Caco-2 (cell line): ENCODE measurements at regions of chr2 and their contacts with region 1.

Region 1: DNA sequence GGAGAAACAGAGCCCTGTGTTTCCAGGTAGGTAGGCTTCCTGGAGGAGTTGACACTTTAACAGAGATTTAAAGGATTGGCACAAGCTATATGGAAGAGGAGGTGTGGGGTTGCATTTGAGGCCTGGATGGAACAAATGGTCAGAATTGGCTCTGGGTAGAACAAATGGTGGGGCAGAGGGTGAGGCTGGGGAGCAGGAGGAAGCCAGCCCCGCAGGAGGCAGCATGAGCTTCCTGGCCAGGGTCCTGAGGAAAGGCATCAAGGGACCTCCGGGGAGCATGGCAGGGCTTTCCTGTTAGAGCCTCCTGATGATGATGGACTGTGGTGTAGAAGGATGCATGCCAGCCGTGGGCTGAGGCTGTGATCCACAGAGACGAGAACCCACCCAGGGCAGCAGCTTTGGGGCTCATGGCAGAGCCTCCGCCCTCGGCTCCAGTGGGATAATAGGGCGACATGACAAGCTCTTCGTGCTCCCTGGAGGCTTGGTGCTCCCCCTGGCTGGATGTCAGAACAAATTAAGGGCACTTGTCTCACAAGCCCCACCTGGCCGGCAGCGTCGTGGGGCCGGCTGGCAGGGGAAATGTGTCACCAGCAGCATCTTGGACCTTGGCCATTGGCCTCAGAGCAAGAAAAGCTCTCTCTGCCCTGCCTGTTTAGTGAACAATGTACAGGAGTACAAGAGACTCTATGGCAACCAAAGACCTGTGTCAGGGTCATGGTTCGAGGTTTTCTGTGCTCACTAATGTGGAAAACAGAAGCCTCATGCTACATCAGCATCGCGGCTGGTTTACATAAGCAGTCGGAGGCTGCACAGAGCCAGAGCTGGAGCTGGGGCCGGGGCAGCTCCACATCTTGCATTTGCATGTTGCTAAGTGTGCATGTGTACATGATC is 153.5 kb downstream of the MYCN start:
- DNase-seq: peak; percentile 25 to 73
- H3K4me3 ChIP-seq: no peak overlapping the region
- H3K4me3 Mint-ChIP-seq: no peak overlapping the region
- H3K27ac Mint-ChIP-seq: peak overlapping the region; percentile 37
- H3K4me1 ChIP-seq: peaks cover 39% of the 10 kb centered on the region
- H3K4me1 Mint-ChIP-seq: peaks cover 16% of the 10 kb centered on the region
- H3K27me3 ChIP-seq: no peaks in the 10 kb centered on the region
- H3K27me3 Mint-ChIP-seq: no peaks in the 10 kb centered on the region
- CTCF ChIP-seq: no peak

Region 2: GRCh38 chr2:16012619-16013358 is 81.1 kb before region 1 on chr2:
- CTCF ChIA-PET with region 1: no interaction called
- POLR2A ChIA-PET with region 1: no interaction called
- intact Hi-C with region 1: loop called (anchors 5 kb)
- DNase-seq: peak; percentile 83
- H3K4me3 ChIP-seq: peak overlapping the region; percentile 26; the same call in 1 of the 2 replicates
- H3K4me3 Mint-ChIP-seq: peak overlapping the region; percentile 75
- H3K27ac Mint-ChIP-seq: peak overlapping the region; percentile 96
- H3K4me1 ChIP-seq: peaks cover 18% of the 10 kb centered on the region; the same call in 1 of the 2 replicates
- H3K4me1 Mint-ChIP-seq: peaks cover 26% of the 10 kb centered on the region
- H3K27me3 ChIP-seq: no peaks in the 10 kb centered on the region
- H3K27me3 Mint-ChIP-seq: no peaks in the 10 kb centered on the region
- CTCF ChIP-seq: no peak

Region 3: GRCh38 chr2:16069933-16070647 is 23.8 kb before region 1 on chr2:
- CTCF ChIA-PET with region 1: no interaction called
- POLR2A ChIA-PET with region 1: no interaction called
- intact Hi-C with region 1: loop called (anchors 1 kb)
- DNase-seq: peak; percentile 68 to 77
- H3K4me3 ChIP-seq: no peak overlapping the region
- H3K4me3 Mint-ChIP-seq: no peak overlapping the region
- H3K27ac Mint-ChIP-seq: peak overlapping the region; percentile 81
- H3K4me1 ChIP-seq: peaks cover 45% of the 10 kb centered on the region
- H3K4me1 Mint-ChIP-seq: peaks cover 34% of the 10 kb centered on the region
- H3K27me3 ChIP-seq: no peaks in the 10 kb centered on the region
- H3K27me3 Mint-ChIP-seq: no peaks in the 10 kb centered on the region
- CTCF ChIP-seq: no peak

Region 4: GRCh38 chr2:16104949-16105668 is 11.2 kb after region 1 on chr2:
- CTCF ChIA-PET with region 1: no interaction called
- POLR2A ChIA-PET with region 1: interaction called, 13 read pairs
- intact Hi-C with region 1: no loop called
- DNase-seq: no peak
- H3K4me3 ChIP-seq: no peak overlapping the region
- H3K4me3 Mint-ChIP-seq: no peak overlapping the region
- H3K27ac Mint-ChIP-seq: peak overlapping the region; percentile 48
- H3K4me1 ChIP-seq: peaks cover 67% of the 10 kb centered on the region
- H3K4me1 Mint-ChIP-seq: peaks cover 52% of the 10 kb centered on the region
- H3K27me3 ChIP-seq: no peaks in the 10 kb centered on the region
- H3K27me3 Mint-ChIP-seq: no peaks in the 10 kb centered on the region
- CTCF ChIP-seq: no peak

Region 5: DNA sequence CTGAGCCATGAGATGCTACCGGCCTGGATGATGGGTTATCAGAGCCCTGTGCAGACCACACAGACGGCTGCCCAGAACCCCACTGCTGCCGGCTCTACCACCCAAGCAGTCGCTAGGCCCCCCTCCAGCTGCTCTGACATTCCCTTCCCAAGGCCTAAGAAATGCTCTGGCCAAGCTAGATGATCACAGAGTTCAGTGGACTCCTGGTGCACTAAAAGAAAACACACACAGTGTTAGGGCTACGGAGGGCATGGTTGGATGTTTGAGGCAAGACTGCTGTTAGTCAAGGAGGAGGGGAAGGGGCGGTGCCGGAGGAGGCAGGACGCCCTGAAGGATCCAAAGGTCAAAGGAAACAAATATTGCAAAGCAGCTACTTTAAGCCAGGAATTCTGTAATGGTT is 21.0 kb after region 1 on chr2:
- CTCF ChIA-PET with region 1: no interaction called
- POLR2A ChIA-PET with region 1: no interaction called
- intact Hi-C with region 1: loop called (anchors 2 kb)
- DNase-seq: peak; percentile 83 to 88
- H3K4me3 ChIP-seq: no peak overlapping the region
- H3K4me3 Mint-ChIP-seq: no peak overlapping the region
- H3K27ac Mint-ChIP-seq: no peak overlapping the region
- H3K4me1 ChIP-seq: peaks cover 36% of the 10 kb centered on the region
- H3K4me1 Mint-ChIP-seq: peaks cover 12% of the 10 kb centered on the region
- H3K27me3 ChIP-seq: no peaks in the 10 kb centered on the region
- H3K27me3 Mint-ChIP-seq: no peaks in the 10 kb centered on the region
- CTCF ChIP-seq: no peak

Region 6: GRCh38 chr2:16507655-16508489 is 414.0 kb after region 1 on chr2:
- CTCF ChIA-PET with region 1: no interaction called
- POLR2A ChIA-PET with region 1: no interaction called
- intact Hi-C with region 1: loop called (anchors 10 kb)
- DNase-seq: peak; percentile 66 to 82
- H3K4me3 ChIP-seq: peak overlapping the region; percentile 26
- H3K4me3 Mint-ChIP-seq: peak overlapping the region; percentile 61
- H3K27ac Mint-ChIP-seq: peak overlapping the region; percentile 37
- H3K4me1 ChIP-seq: peaks cover 36% of the 10 kb centered on the region
- H3K4me1 Mint-ChIP-seq: peaks cover 12% of the 10 kb centered on the region
- H3K27me3 ChIP-seq: no peaks in the 10 kb centered on the region
- H3K27me3 Mint-ChIP-seq: no peaks in the 10 kb centered on the region
- CTCF ChIP-seq: peak; percentile 83 to 91